Right ventricle myocardium superior (tissue), 1 donor: ENCODE measurements at regions of chr2 and their contacts with region 1.

Region 1: DNA sequence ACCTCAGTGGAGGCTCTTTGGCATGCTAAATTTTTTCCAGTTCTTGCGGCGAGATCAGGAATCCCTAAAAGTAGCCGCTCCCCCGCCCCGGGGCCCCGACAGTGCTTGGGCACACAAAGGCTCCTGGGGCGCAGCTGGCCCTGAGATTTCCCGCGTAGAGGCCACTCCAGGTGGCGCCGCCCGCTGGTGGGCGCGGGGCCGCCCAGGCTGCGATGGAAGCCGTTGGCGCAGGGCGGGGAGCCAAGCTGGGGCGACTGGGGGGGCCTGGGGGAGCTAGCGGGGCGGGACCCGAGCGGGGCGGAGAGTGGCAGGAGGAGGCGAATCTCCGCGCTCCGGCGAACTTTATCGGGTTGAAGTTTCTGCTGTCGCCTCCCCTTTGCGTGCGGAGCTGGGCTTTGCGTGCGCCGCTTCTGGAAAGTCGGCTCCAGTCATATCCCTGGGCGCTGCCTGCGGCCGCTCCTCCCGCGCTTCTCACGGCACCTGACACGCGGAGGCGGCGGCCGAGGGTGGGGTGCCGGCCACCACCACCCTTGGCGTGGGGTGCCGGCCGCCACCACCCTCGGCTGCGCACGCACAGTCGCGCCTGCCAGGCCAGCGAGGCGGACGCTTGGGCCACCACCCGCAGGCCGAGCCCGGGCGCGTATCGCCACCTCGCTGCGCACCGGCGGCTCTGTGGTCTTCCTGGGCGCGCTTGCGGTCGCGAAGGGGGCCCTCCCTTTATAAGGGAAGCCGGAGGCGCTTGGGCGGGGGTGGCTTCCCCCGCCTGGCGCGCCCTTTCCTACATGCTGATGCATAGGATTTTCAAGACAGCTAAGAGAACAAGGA is 867 bp upstream of the CYP1B1 start:
- DNase-seq: peak; percentile 87
- ATAC-seq: peak; percentile 76

Region 2: DNA sequence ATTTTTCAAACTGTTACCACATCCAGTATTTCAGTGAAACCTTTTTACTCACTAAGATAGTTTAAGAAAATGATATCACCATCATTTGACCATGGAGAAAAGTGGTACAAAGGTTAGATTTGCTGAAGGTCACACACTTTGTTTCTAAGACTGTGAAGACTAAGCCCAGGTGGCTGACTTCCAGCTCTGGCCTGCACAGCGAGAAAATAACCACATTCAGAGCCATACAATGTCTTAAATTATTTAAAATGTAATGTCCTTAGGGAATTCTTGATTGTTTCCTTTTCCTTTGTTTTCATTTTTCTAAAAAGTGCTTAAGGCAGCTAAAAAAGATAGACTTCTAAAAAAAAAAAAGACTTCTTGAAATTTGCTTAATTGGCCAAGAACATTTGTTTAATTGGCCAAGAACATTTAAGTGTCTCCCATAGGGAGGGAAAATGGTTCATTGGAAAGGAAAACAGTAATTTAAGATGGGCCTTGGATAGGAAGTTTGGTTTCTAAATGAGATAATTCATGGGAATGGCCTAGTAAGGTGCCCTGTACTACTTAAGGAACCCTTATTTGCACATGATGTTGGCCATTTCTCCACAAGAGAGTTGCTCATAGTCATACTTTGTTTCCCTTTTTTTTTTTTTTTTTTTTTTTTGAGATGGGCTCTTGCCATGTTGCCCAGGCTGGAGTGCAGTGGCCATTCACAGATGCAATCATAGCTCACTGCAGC is 46.0 kb before region 1 on chr2:
- intact Hi-C with region 1: no loop called
- DNase-seq: peak; percentile 44
- ATAC-seq: no peak

Region 3: GRCh38 chr2:38274286-38275276 is 197.8 kb after region 1 on chr2:
- intact Hi-C with region 1: loop called (anchors 10 kb)
- DNase-seq: no peak
- ATAC-seq: peak; percentile 77

Region 4: GRCh38 chr2:38634684-38635083 is 557.9 kb after region 1 on chr2:
- intact Hi-C with region 1: no loop called
- DNase-seq: no peak
- ATAC-seq: no peak